ENCODE measurements at regions of chr1 and their contacts with region 1.

Region 1: DNA sequence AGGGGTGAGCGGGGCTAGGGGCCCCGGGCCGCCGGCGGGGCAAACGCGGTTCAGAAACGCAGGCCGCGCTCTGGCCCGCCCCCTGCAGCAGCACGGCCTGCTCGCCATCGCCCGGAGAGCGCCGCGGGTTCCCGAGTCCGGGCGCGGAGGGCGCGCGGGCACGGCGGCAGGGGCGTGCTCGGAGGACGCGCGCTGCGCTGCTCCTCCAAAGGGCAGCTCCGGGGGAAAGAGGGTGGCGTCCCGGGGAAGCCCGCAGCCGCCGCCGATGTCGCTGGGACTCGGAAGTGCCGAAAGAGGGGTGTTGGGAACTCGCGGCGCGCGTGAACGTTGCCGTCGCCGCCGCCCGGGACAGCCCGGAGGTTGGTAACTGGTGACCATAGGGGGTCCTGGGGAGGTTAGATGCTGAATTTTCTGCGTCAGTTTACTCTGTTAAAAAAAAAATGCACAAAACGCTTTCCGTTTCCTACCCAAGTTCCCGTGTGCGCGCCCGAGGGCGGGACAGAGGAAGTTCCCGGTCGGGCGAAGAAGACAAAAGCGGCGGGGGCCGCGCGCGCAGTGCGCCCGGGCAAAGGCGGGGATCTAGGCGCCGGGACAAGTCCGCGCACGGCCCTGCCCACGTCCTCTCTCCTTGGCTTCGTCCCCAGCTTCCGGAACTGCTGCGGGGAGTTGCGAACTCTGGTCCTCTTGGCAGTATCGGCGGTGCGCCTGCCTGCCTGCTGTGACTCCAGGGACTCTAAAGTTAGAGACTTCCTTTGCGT is at the start of gene HHAT:
- DNase-seq: peak; percentile 25 to 74 (median 38)
- ATAC-seq: peak; percentile 67
- H3K4me3 ChIP-seq: peak within 1 kb of the TSS; percentile 66
- H3K4me3 Mint-ChIP-seq: peak within 1 kb of the TSS; percentile 85 to 98 (median 94)
- H3K27ac ChIP-seq: peak within 1 kb of the TSS; percentile 61
- H3K27ac Mint-ChIP-seq: peak within 1 kb of the TSS; percentile 74 to 95 (median 89)
- H3K4me1 ChIP-seq: peaks cover 8 to 33% of the 10 kb centered on the region in 2 donors
- H3K4me1 Mint-ChIP-seq: peaks cover 13 to 31% (median 21%) of the 10 kb centered on the region in 7 donors
- H3K27me3 ChIP-seq: no peaks in the 10 kb centered on the region
- H3K27me3 Mint-ChIP-seq: peaks cover under 1 to 35% (median 10%) of the 10 kb centered on the region in 5 donors
- total RNA-seq, gene HHAT: 1.1 to 3.8 (median 2.7) TPM

Region 2: GRCh38 chr1:210340311-210340710 is 11.4 kb after region 1 on chr1:
- CTCF ChIA-PET with region 1: no interaction called
- POLR2A ChIA-PET with region 1: no interaction called
- intact Hi-C with region 1: loop called in 1 of 2 experiments (anchors 1 kb)
- DNase-seq: no peak
- ATAC-seq: no peak
- H3K4me3 ChIP-seq: no peak overlapping the region
- H3K4me3 Mint-ChIP-seq: peak overlapping the region in 4 of 10 donors; percentile 20 to 45 (median 22)
- H3K27ac ChIP-seq: no peak overlapping the region
- H3K27ac Mint-ChIP-seq: peak overlapping the region in 2 of 9 donors; percentile 21 to 27
- H3K4me1 ChIP-seq: peaks cover 0 to 31% of the 10 kb centered on the region in 2 donors
- H3K4me1 Mint-ChIP-seq: peaks cover 0 to 19% (median 15%) of the 10 kb centered on the region in 7 donors
- H3K27me3 ChIP-seq: no peaks in the 10 kb centered on the region
- H3K27me3 Mint-ChIP-seq: peaks cover 0 to 18% (median 0%) of the 10 kb centered on the region in 5 donors

Region 3: GRCh38 chr1:210373885-210374599 is 45.1 kb after region 1 on chr1:
- CTCF ChIA-PET with region 1: no interaction called
- POLR2A ChIA-PET with region 1: no interaction called
- intact Hi-C with region 1: loop called in 1 of 2 experiments (anchors 1 kb)
- DNase-seq: peak in 4 of 9 donors; percentile 7 to 67 (median 10)
- ATAC-seq: peak; percentile 79
- H3K4me3 ChIP-seq: no peak overlapping the region
- H3K4me3 Mint-ChIP-seq: no peak overlapping the region
- H3K27ac ChIP-seq: no peak overlapping the region
- H3K27ac Mint-ChIP-seq: peak overlapping the region in 2 of 9 donors; percentile 36 to 46
- H3K4me1 ChIP-seq: peaks cover 0 to 6% of the 10 kb centered on the region in 2 donors
- H3K4me1 Mint-ChIP-seq: peaks cover 0 to 15% (median 11%) of the 10 kb centered on the region in 7 donors
- H3K27me3 ChIP-seq: no peaks in the 10 kb centered on the region
- H3K27me3 Mint-ChIP-seq: peaks cover 0 to 9% (median 0%) of the 10 kb centered on the region in 5 donors

Measured in naive thymus-derived CD4-positive, alpha-beta T cell (primary cell).